Activated T-helper 2 cell treated with anti-CD3 and anti-CD28 coated beads, Interferon-gamma antibody, Interleukin-2, Interleukin-4, amounts not matched to agents 10 μg/mL and 5 μg/mL and 100 μg/mL, durations not matched to agents 14 hours and 24 hours and 36 hours (primary cell): ENCODE measurements at regions of chr2 and their contacts with region 1.

Region 1: DNA sequence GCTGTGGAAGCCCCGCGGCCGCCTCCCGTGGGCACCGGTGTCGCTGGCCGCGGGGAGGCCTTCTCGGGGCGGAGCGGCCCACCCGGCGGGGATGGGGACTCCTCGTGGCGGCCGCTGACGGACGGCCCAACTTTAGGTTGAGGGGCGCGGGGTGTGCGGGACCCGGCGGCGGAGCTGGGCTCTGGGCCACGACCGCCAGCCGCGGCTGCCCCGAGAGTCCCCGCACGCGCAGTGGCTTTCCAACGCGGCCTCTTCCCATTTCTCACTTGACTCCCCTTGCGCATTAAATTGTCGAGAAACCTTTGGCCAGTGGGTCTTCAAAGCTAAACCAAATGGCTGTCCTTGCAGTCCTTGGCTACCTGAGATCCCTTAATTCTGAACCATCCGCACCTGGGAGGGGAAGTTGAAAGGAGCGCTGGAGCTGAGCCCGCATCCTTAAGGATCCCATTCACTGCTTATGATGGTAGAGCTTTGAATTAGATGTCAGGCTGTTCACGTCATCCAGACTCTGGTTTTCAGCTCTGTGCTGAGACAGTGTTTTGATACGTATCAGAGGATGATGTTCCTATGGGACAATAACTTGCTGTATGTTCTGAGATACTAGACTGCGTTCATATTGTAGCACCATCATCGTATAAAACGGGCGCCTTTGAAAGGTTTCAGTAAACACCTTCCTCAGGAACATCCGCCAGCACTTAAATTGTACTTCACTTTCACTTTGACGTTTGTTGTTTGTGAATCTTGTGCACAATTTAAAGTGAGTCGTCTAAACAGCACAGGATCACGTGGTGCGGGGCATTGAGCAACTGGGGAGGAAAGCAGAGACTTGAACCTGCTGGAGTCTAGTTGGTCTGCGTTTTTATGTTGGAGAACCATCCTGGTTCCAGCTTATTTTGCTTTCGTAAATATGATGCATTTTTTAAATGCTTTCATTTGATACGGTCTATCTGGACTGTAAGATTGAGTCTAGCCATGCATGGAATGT is 874 bp downstream of the CLIP4 start:
- DNase-seq: peak; percentile 74
- H3K4me3 Mint-ChIP-seq: peak overlapping the region; percentile 80
- H3K27ac Mint-ChIP-seq: peak overlapping the region; percentile 93
- H3K4me1 Mint-ChIP-seq: peaks cover 51% of the 10 kb centered on the region
- H3K27me3 Mint-ChIP-seq: peaks cover 4% of the 10 kb centered on the region

Region 2: GRCh38 chr2:28894470-28895177 is 221.5 kb before region 1 on chr2 and contains the start of gene WDR43:
- intact Hi-C with region 1: loop called (anchors 10 kb)
- DNase-seq: peak; percentile 97
- H3K4me3 Mint-ChIP-seq: peak within 1 kb of the TSS; percentile 99
- H3K27ac Mint-ChIP-seq: peak within 1 kb of the TSS; percentile 95
- H3K4me1 Mint-ChIP-seq: peaks cover 38% of the 10 kb centered on the region
- H3K27me3 Mint-ChIP-seq: peaks cover 7% of the 10 kb centered on the region
- total RNA-seq, gene WDR43: 117 and 128 TPM in 2 replicates

Region 3: DNA sequence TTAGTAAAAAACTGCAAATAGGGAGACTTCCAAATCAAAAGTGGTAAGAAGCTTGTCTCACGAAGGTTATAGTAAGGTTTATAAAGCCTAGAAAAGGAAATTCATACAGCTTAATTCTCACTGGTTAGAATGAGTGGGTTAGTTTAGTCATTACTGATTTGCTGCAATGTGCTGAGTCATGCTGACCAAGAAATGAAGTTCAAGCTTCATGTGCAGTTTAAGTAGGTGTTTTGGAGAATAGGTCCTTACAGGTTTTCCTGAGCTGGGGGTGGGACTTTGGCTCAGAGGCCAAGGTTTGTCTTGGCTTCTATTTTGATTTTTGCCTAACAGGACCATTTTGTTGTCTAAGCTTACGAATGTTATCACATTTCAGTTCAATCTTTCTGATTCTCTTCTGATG is 14.2 kb after region 1 on chr2:
- intact Hi-C with region 1: loop called (anchors 1 kb)
- DNase-seq: no peak
- H3K4me3 Mint-ChIP-seq: no peak overlapping the region
- H3K27ac Mint-ChIP-seq: peak overlapping the region; percentile 10
- H3K4me1 Mint-ChIP-seq: peaks cover 26% of the 10 kb centered on the region
- H3K27me3 Mint-ChIP-seq: no peaks in the 10 kb centered on the region

Region 4: GRCh38 chr2:29314816-29315571 is 198.9 kb after region 1 on chr2:
- intact Hi-C with region 1: loop called (anchors 2 kb)
- DNase-seq: peak; percentile 59
- H3K4me3 Mint-ChIP-seq: peak overlapping the region; percentile 63
- H3K27ac Mint-ChIP-seq: peak overlapping the region; percentile 76
- H3K4me1 Mint-ChIP-seq: peaks cover 45% of the 10 kb centered on the region
- H3K27me3 Mint-ChIP-seq: peaks cover 1% of the 10 kb centered on the region